ENCODE measurements at regions of chr16 and their contacts with region 1.

Region 1: DNA sequence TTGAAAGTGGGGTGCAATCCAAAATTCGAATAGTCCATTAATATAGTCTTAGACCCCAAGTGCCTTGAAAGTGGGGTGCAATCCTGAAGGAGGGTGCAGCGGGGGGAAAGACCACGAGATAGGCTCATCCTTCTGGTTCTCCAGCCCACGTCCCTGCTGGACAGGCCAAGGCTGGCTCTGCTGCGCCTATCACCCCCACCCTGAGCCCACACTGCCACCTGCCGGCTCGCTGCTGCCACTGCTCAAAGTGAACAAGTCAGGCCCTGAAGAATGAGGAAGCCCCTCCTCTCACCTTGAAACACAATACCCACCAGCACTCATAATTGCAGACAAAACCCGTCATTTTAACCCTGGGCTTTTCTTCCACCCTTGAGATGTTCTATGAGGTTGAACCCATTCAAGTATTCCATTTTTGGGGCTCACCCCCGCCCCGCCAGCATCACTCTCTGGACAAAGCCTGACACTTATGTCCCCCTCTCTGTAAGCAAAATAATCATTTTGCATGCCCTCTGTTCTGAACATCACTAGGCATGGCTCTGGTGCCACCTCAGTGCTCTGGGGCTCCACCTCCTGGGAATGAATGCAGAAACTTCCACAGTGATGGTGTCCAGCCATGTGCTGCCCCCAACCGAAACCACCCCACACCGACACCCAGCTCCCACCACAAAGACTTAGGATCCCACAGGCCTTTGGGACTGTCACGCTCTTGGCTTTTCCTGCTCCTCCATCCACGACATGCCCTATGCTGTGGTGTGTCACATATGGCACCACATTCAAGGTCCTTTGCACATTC is 56.8 kb downstream of the BEAN1 start:
- DNase-seq: no peak
- H3K4me3 ChIP-seq: no peak overlapping the region
- H3K27ac ChIP-seq: no peak overlapping the region
- H3K4me1 ChIP-seq: peaks cover 17% of the 10 kb centered on the region
- H3K27me3 ChIP-seq: no peaks in the 10 kb centered on the region
- CTCF ChIP-seq: peak; percentile 79 to 93 (median 85)
- POLR2A ChIP-seq: no peak

Region 2: DNA sequence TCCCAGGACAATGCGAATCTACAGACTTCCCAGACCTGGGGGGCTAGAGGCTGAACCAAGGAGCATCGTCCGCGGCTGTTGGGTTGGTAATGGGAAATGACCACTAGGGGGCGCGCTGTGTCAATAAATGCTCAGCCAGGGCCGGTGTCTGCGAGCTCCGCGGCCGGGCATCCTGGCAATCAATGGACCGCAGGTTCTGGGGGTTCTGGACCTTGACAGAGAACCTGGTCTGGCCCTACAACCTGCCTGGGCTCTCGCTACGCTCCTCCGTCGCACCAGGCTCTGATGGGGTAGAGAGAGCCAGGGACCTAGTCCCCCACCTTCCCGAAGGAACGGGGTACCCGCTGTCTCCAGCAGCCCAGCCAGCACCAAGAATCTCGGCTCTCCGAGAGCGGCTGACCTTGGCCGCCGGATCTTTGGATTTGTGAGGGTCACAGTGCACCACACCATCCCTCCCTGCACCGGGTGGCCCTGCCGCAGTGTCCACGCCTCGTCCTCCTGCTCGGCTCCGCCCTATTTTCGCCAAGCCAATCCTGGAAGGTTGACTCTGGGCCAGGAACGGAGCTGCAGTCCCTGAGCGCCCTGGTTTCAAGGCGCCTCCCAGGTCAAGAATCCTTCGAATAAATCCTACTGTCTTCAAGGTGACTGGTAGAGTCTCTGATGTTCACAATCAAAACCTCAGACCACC is 77.2 kb before region 1 on chr16:
- intact Hi-C with region 1: loop called (anchors 5 kb)
- DNase-seq: peak in 1 of 2 donors; percentile 87
- H3K4me3 ChIP-seq: peak overlapping the region; percentile 49 to 60
- H3K27ac ChIP-seq: no peak overlapping the region
- H3K4me1 ChIP-seq: no peaks in the 10 kb centered on the region
- H3K27me3 ChIP-seq: no peaks in the 10 kb centered on the region
- CTCF ChIP-seq: peak; percentile 84 to 89 (median 88)
- POLR2A ChIP-seq: no peak

Region 3: DNA sequence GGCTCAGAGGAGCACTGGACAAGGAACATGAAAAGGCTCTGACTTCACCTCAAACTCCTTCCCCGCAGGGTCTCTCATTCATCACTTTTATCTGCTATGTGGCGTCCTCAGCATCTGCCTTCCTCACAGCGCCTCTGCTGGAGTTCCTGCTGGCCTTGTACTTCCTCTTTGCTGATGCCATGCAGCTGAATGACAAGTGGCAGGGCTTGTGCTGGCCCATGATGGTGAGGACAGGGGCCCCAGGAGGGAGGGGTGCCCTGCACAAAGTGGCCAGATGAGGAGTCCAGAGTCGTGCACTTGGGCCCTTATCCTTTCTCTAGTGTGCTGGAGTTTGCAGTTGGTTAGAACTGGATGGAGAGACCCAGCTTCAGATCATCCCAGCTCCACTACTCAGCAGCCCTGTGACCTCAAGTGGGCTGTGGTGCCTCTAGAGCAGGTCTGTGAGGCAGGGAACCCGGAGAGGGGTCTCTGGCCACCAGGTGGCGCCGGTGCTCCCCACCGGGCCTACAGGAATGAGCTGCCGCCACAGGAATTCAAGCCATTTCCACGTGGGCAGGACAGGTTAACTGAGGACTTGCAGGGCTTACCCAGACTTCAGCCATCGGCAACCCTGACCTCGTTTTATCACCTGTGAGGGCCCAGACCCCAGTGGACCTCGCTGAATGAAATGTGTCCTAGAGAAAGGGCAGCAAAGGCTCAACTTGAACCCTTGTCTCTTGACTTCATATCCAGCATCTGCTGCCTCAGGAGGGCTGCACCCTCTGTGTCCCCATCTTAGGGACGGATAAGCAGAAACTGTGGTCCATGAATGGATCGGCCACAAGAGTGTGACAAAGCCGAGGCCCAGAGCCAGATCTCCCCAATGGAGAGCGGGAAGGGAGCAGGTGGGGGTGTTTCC is 124.6 kb after region 1 on chr16:
- intact Hi-C with region 1: loop called (anchors 10 kb)
- DNase-seq: no peak
- H3K4me3 ChIP-seq: no peak overlapping the region
- H3K27ac ChIP-seq: peak overlapping the region; percentile 27
- H3K4me1 ChIP-seq: peaks cover 46% of the 10 kb centered on the region
- H3K27me3 ChIP-seq: no peaks in the 10 kb centered on the region
- CTCF ChIP-seq: peak; percentile 69 to 88 (median 82)
- POLR2A ChIP-seq: no peak

Region 4: GRCh38 chr16:66696669-66697630 is 213.1 kb after region 1 on chr16 and contains the start of gene CMTM4:
- intact Hi-C with region 1: loop called (anchors 5 kb)
- DNase-seq: no peak
- H3K4me3 ChIP-seq: peak within 1 kb of the TSS; percentile 64 to 98
- H3K27ac ChIP-seq: peak within 1 kb of the TSS; percentile 91
- H3K4me1 ChIP-seq: peaks cover 26% of the 10 kb centered on the region
- H3K27me3 ChIP-seq: no peaks in the 10 kb centered on the region
- CTCF ChIP-seq: no peak
- POLR2A ChIP-seq: peak in 1 of 2 donors; percentile 8
- total RNA-seq, gene CMTM4: 15.7 TPM